Naive thymus-derived CD8-positive, alpha-beta T cell (primary cell): ENCODE measurements at regions of chr9 and their contacts with region 1.

Region 1: GRCh38 chr9:89497978-89498851 is at the start of gene SEMA4D:
- DNase-seq: peak in 5 of 10 donors; percentile 21 to 56 (median 45)
- ATAC-seq: peak in 1 of 2 donors; percentile 5
- H3K4me3 Mint-ChIP-seq: peak within 1 kb of the TSS; percentile 79 to 99 (median 98)
- H3K27ac Mint-ChIP-seq: peak within 1 kb of the TSS; percentile 88 to 98 (median 96)
- H3K4me1 Mint-ChIP-seq: peaks cover 54 to 92% (median 89%) of the 10 kb centered on the region in 4 donors
- H3K27me3 Mint-ChIP-seq: no peaks in the 10 kb centered on the region
- polyA plus RNA-seq, gene SEMA4D: 154 to 359 (median 176) TPM

Region 2: GRCh38 chr9:89318123-89319014 is 179.8 kb before region 1 on chr9 and contains the start of gene SECISBP2:
- POLR2A ChIA-PET with region 1: no interaction called
- DNase-seq: peak; percentile 86 to 99 (median 92)
- ATAC-seq: peak; percentile 86 to 89
- H3K4me3 Mint-ChIP-seq: peak within 1 kb of the TSS; percentile 83 to 94 (median 89)
- H3K27ac Mint-ChIP-seq: peak within 1 kb of the TSS; percentile 87 to 99 (median 98)
- H3K4me1 Mint-ChIP-seq: peaks cover 21 to 68% (median 49%) of the 10 kb centered on the region in 4 donors
- H3K27me3 Mint-ChIP-seq: peaks cover 0 to 4% (median 0%) of the 10 kb centered on the region in 5 donors
- polyA plus RNA-seq, gene SECISBP2: 19.6 to 27.9 (median 21.2) TPM

Region 3: DNA sequence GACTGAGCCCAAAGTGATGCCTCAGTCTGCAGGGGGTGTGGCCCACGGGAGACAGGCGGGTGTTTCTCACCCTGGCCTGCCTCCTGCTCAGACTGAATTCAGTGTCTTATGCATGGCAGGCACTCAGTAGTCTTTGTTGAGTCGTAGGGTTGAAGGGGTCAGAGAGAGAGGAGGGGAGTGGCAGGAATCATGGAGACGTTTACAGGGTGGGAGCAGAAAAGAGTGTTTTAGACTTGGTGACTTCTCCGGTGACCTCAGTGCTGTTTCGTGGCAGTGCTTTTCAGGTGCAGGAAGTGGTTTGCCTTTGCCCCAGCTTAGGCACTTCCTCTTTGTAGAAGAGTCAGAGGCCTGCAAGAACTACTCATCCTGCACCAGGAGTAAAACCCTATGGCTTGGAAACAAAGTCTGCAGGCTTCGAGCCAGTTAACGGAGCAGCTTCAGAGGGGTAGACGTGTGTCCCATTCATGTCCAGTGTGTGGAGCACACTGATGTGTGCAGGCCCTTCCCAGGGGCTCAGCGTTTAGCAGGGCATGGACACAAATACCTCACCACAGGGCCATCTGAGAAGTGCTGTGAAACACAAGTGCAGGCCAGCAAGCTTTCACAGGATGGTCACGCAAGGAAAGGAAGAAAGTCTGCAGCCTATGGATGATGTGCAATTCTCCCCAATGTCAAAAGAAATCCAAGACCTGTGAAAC is 24.2 kb after region 1 on chr9:
- POLR2A ChIA-PET with region 1: interaction called, 63 read pairs
- DNase-seq: peak; percentile 41 to 90 (median 81)
- ATAC-seq: peak; percentile 84 to 89
- H3K4me3 Mint-ChIP-seq: peak overlapping the region; percentile 49 to 87 (median 75)
- H3K27ac Mint-ChIP-seq: peak overlapping the region; percentile 87 to 98 (median 96)
- H3K4me1 Mint-ChIP-seq: peaks cover 56 to 99% (median 94%) of the 10 kb centered on the region in 4 donors
- H3K27me3 Mint-ChIP-seq: no peaks in the 10 kb centered on the region

Region 4: DNA sequence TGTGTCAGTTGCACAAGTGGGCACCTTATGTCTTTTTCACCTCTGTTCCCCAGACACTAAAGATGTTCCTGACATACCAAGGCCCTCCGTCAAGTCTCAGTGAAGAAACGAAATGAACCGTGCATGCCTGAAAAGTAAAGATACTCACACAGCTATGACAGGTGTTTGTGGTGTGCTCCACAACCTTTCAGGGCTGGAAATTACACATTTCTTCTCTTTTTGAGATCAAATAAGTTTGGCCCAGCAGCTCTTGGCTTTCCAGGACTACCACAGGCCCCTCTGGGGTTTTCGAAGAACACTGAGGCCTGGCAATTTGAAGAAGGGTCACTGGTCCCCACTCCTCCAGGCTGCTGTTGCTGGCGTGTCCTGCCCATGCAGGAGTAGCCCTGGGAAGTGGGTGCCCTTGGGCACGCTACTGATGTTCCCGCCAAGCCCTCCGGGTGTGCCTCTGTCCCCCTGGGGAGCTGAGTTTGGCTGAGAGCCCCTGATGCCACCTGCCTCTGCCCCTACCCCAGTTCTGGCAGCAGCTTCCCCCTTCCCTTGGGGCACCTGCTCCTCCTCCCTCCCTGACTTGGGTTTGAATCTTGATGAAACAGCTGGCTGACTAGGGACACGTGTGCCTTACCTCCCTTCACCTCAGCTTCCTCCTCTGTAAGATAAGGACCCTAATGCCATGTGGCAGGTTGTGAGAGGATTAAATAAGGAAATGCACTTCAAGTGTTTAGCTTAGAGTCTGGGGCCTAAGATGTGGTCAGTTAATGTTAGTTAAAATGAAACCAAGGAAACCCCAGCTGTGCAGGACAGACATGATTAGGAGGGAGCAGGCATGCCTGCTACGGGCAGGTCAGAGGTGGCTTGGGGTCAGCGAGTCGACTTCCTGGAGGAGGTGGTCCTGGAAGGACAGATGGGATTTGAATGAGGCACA is 57.5 kb after region 1 on chr9:
- POLR2A ChIA-PET with region 1: no interaction called
- DNase-seq: no peak
- ATAC-seq: peak; percentile 14 to 31
- H3K4me3 Mint-ChIP-seq: peak overlapping the region in 6 of 10 donors; percentile 37 to 67 (median 54)
- H3K27ac Mint-ChIP-seq: peak overlapping the region in 8 of 10 donors; percentile 16 to 87 (median 74)
- H3K4me1 Mint-ChIP-seq: peaks cover 12 to 31% (median 26%) of the 10 kb centered on the region in 4 donors
- H3K27me3 Mint-ChIP-seq: peaks cover 0 to 3% (median 0%) of the 10 kb centered on the region in 5 donors

Region 5: GRCh38 chr9:89814340-89815040 is 316.3 kb after region 1 on chr9:
- POLR2A ChIA-PET with region 1: no interaction called
- DNase-seq: peak in 1 of 10 donors; percentile 7
- ATAC-seq: peak in 1 of 2 donors; percentile 42
- H3K4me3 Mint-ChIP-seq: no peak overlapping the region
- H3K27ac Mint-ChIP-seq: no peak overlapping the region
- H3K4me1 Mint-ChIP-seq: peaks cover 12 to 35% (median 31%) of the 10 kb centered on the region in 4 donors
- H3K27me3 Mint-ChIP-seq: peaks cover 4 to 26% (median 15%) of the 10 kb centered on the region in 5 donors